G401 (cell line): ENCODE measurements at regions of chr4 and their contacts with region 1.

Region 1: DNA sequence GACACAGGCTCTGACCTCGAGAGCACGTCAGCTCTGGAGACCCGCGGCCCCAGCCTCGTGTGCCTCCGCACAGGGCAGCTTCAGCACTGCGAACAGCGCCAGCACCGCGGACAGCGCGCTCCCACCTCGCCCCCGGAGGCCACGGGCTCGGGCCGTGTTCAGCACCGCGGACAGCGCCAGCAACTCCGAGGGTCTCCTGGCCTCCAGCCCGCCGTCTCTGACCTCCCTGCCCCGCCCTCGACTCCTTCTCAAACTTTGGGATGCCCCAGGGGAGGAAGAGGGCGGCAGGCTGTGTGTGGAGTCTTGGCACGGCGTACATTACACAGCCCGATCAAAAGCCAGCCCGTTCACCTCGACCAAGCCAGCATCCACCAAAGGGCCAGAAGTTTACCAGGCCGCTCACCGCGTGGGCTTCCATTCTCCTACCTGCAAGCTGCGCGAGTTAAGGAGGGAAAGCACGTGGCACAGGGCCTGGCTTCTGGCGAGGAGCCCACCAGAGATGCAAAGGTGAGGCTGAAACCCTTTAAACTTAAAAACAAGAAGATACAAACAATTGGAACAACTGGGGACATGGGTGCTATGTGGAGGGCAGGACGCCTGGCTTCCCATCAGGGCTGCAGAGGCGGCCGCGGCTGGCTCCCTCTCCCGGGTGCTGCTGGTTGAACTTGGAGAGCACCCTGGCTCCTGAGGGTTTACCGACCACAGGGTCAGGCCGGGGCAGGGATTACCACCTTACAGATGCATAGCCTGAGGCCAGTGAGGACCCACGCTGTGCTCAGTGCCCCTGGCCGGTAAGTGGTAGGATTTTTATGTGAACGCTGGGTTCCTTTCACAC is 4.5 kb upstream of the NKX1-1 start:
- DNase-seq: no peak

Region 2: GRCh38 chr4:1628892-1629698 is 218.4 kb after region 1 on chr4:
- in situ Hi-C with region 1: loop called (anchors 25 kb)
- DNase-seq: peak; percentile 61

Region 3: DNA sequence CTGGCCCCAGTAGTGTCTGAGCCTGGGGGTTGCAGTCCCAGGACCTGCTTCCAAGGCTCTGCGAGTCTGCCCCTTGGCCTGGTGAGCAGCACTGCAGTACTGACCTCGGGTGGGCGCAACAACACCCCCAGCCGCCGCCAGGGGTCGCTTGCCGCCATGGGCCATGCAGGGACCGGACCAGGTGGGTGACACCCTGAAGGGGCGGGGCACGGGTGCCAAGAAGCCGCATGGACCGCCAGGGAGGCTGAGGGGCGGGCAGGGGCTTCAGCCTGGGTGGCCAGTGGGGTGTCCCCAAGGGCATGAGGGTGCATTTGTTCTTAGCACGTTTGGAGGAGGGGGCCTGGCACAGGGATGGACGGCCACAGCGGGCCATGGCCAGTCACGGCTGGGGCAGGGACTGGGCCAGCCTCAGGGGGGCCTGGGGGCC is 335.6 kb after region 1 on chr4:
- in situ Hi-C with region 1: no loop called
- DNase-seq: peak; percentile 73